Activated naive CD4-positive, alpha-beta T cell treated with anti-CD3 and anti-CD28 coated beads, Interleukin-2, amount 10 ng/mL, durations not matched to agents 7 days and 5 days (primary cell): ENCODE measurements at regions of chr14 and their contacts with region 1.

Region 1: GRCh38 chr14:23076785-23077408 is 18.0 kb downstream of the ACIN1 start:
- DNase-seq: peak; percentile 51
- H3K4me3 Mint-ChIP-seq: no peak overlapping the region
- H3K27ac Mint-ChIP-seq: no peak overlapping the region
- H3K4me1 Mint-ChIP-seq: peaks cover 5% of the 10 kb centered on the region
- H3K27me3 Mint-ChIP-seq: no peaks in the 10 kb centered on the region

Region 2: DNA sequence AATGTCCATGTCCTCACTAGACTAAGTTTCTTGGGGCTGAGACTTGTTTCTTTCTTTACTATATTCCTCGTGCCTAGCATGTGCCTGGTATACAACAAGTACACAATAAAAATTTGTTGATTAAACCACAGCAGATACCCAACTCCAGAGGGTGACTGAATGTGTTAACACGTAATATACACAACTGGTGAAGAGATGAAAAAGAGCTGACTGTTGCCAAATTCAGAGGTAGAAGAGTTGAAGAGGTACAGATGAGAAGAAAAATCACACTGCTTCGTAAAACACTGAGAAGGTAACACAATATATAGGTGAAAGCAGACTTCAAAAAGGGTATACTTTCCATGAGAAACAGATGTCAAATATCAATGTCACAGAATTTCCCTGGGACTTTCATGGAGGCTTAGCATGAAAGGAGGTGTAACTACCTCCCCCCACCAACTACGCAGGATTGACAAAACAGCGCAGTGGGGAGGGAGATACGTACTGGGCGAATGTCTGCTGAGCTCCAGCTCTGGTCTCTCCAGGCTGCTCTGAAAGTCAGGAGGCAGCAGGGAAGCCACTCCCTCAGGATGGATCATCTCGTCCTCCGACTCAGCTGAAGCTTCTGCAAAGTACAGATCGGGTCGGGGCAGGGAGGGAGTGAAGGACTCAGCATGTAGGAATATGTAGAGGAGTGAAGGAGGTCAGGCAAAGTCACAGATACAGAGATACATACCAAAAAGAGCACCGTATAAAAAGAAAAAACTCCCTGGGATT is 12.8 kb after region 1 on chr14:
- CTCF ChIA-PET with region 1: interaction called, 26 read pairs
- DNase-seq: no peak
- H3K4me3 Mint-ChIP-seq: no peak overlapping the region
- H3K27ac Mint-ChIP-seq: no peak overlapping the region
- H3K4me1 Mint-ChIP-seq: peaks cover 19% of the 10 kb centered on the region
- H3K27me3 Mint-ChIP-seq: no peaks in the 10 kb centered on the region

Region 3: DNA sequence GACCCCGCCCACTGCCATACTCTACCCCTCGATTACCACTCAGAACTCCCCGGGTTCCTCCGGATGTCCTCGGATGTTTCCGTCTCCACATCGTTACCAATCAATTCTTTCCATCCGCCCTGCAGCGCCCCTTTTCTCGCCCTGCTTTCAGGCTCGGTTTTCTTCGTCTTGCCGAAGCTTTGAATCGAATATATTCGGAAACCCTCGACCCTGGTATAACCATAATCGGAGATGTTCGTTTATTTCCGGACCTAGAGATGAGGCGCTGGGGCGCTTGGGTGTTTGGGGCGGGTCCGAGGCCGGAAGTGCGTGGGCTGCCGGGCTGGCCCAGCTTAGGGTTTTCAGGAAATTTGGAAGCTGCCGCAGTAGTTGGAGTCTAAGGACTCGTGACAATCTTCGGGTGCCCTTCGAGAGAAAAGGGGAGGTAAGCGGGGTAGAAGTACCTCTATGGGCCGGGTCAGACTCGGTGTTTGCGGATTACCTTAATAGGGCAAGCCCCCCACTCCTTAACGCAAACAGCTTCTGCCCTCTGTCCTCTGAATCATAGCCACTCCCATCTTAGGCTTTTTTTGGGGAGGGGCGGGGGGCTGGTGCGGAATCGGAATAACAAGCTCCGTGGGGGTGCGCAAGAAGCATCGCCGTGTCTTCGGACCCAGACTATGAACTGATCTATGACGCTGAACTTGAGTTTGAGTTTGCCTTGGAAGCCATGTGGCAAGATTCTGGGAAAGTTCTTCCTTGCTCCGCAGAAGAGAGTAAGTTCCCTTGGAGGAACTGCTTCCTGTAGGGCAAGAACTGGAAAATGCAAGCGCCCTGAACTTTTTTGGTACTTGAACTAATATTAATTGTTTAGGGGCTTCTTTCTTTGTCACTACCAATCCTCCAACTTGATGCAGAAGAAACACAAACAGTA is 18.6 kb after region 1 on chr14 and contains the start of gene C14orf119:
- CTCF ChIA-PET with region 1: interaction called, 26 read pairs
- DNase-seq: peak; percentile 100
- H3K4me3 Mint-ChIP-seq: no peak within 1 kb of the TSS
- H3K27ac Mint-ChIP-seq: no peak within 1 kb of the TSS
- H3K4me1 Mint-ChIP-seq: peaks cover 30% of the 10 kb centered on the region
- H3K27me3 Mint-ChIP-seq: no peaks in the 10 kb centered on the region

Region 4: GRCh38 chr14:23113431-23114119 is 36.7 kb after region 1 on chr14:
- CTCF ChIA-PET with region 1: interaction called, 28 read pairs
- DNase-seq: no peak
- H3K4me3 Mint-ChIP-seq: no peak overlapping the region
- H3K27ac Mint-ChIP-seq: no peak overlapping the region
- H3K4me1 Mint-ChIP-seq: peaks cover 16% of the 10 kb centered on the region
- H3K27me3 Mint-ChIP-seq: peaks cover 27% of the 10 kb centered on the region

Region 5: GRCh38 chr14:23186913-23187654 is 110.2 kb after region 1 on chr14:
- CTCF ChIA-PET with region 1: interaction called, 20 read pairs
- DNase-seq: peak; percentile 51
- H3K4me3 Mint-ChIP-seq: no peak overlapping the region
- H3K27ac Mint-ChIP-seq: no peak overlapping the region
- H3K4me1 Mint-ChIP-seq: no peaks in the 10 kb centered on the region
- H3K27me3 Mint-ChIP-seq: peaks cover 14% of the 10 kb centered on the region

Region 6: GRCh38 chr14:23704890-23705289 is 628.0 kb after region 1 on chr14:
- CTCF ChIA-PET with region 1: no interaction called
- DNase-seq: no peak
- H3K4me3 Mint-ChIP-seq: no peak overlapping the region
- H3K27ac Mint-ChIP-seq: no peak overlapping the region
- H3K4me1 Mint-ChIP-seq: no peaks in the 10 kb centered on the region
- H3K27me3 Mint-ChIP-seq: peaks cover 11% of the 10 kb centered on the region